Right cardiac atrium (tissue), 5 donors: ENCODE measurements at regions of chr19 and their contacts with region 1.

Region 1: DNA sequence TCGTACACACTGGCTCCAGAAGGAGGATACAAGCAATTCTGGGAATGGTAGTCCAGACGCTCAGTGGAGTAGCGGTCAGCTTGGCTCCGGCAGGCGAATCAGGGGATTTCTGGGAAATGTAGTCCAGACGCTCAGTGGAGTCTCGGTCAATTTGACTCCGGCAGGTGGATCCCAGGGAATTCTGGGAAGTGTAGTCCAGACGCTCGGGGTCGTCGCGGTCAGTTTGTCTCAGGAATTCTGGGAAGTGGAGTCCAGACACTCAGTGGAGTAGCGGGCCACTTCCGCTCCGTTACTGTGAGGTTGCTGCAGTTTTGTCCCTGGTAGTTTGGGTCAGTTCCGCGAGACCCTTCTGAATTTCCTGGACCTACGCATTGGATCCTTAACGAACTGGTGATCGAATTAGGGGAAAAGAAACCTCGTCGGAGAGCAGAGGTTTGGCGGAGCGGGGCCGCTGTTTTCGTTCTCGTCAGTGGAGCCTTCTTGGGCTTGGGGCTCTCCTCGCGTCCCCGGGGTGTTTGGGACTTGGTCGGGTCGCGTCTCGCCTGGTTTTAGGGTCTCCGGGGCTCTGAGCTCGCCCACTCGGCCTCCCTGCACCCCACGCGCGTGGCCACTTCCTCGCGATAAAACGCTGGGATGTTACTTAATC is at the start of gene ZNF225:
- DNase-seq: peak; percentile 94 to 96 (median 96)
- ATAC-seq: peak; percentile 99
- H3K4me3 ChIP-seq: peak within 1 kb of the TSS; percentile 95
- H3K27ac ChIP-seq: peak within 1 kb of the TSS; percentile 79
- H3K4me1 ChIP-seq: no peaks in the 10 kb centered on the region
- H3K27me3 ChIP-seq: no peaks in the 10 kb centered on the region
- total RNA-seq, gene ZNF225: 3.6 to 4.2 (median 3.9) TPM

Region 2: GRCh38 chr19:44093931-44094765 is 19.1 kb before region 1 on chr19 and contains the start of gene ZNF224:
- intact Hi-C with region 1: loop called in 1 of 4 experiments (anchors 2 kb)
- DNase-seq: peak; percentile 91 to 95 (median 95)
- ATAC-seq: peak; percentile 99
- H3K4me3 ChIP-seq: peak within 1 kb of the TSS; percentile 78
- H3K27ac ChIP-seq: peak within 1 kb of the TSS; percentile 77
- H3K4me1 ChIP-seq: no peaks in the 10 kb centered on the region
- H3K27me3 ChIP-seq: no peaks in the 10 kb centered on the region
- total RNA-seq, gene ZNF224: 14.9 to 17.0 (median 15.9) TPM

Region 3: GRCh38 chr19:44164673-44165512 is 51.6 kb after region 1 on chr19 and contains the start of gene ZNF226:
- intact Hi-C with region 1: loop called in 2 of 4 experiments (anchors 2 to 10 kb)
- DNase-seq: peak; percentile 89 to 94 (median 92)
- ATAC-seq: peak; percentile 99 to 100
- H3K4me3 ChIP-seq: peak within 1 kb of the TSS; percentile 98
- H3K27ac ChIP-seq: peak within 1 kb of the TSS; percentile 92
- H3K4me1 ChIP-seq: no peaks in the 10 kb centered on the region
- H3K27me3 ChIP-seq: no peaks in the 10 kb centered on the region
- total RNA-seq, gene ZNF226: 19.4 to 23.0 (median 22.2) TPM